SK-N-SH (cell line): ENCODE measurements at regions of chr11 and their contacts with region 1.

Region 1: GRCh38 chr11:46346886-46347636 is at the start of gene DGKZ:
- DNase-seq: peak; percentile 100
- H3K4me3 ChIP-seq: peak within 1 kb of the TSS; percentile 82 to 86
- H3K27ac ChIP-seq: peak within 1 kb of the TSS in 1 of 2 experiments; percentile 5; a peak in 1 of 4 replicates
- H3K4me1 ChIP-seq: peaks cover 19 to 22% of the 10 kb centered on the region in 2 experiments; a peak in 3 of 4 replicates
- H3K27me3 ChIP-seq: no peaks in the 10 kb centered on the region
- CTCF ChIP-seq: peak; percentile 53
- EP300 ChIP-seq: no peak
- RAD21 ChIP-seq: peak; percentile 56; the same call in 1 of the 2 replicates
- polyA plus RNA-seq, gene DGKZ: 23.9 and 33.2 TPM in 2 replicates

Region 2: GRCh38 chr11:45736424-45736823 is 610.6 kb before region 1 on chr11:
- CTCF ChIA-PET with region 1: no interaction called
- POLR2A ChIA-PET with region 1: no interaction called
- DNase-seq: no peak
- H3K4me3 ChIP-seq: no peak overlapping the region
- H3K27ac ChIP-seq: no peak overlapping the region
- H3K4me1 ChIP-seq: no peaks in the 10 kb centered on the region
- H3K27me3 ChIP-seq: no peaks in the 10 kb centered on the region
- CTCF ChIP-seq: no peak
- EP300 ChIP-seq: no peak
- RAD21 ChIP-seq: no peak

Region 3: DNA sequence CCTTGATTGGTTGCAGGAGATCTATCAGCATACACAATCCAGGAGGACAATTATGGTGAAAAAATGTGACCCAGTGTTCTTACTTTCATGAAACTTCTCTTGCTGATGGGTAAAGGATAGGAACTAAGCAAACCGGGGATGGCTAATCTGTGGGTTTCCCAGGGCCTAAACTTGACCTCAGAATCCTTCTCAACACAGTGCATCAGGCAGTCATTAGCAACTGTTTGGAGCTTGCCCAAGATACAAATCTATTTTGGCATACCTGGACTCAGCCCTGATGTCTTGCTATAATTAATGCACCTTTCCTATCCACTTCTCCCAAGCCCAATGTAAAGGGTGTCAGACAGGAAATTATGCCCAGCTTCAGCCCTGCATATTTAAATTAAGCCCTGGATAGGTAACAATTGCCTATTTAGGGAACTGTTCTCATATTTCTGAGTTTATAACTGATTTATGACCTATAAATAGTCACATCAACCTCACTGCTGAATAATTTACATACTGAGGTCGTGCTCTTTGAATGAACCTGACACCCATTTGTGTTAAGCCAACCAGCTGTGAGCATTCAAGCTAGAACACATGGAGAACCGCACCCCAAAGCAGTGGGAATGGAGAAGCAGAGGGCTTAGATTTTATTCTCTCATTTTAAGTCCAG is 216.6 kb before region 1 on chr11:
- CTCF ChIA-PET with region 1: no interaction called
- POLR2A ChIA-PET with region 1: no interaction called
- DNase-seq: no peak
- H3K4me3 ChIP-seq: no peak overlapping the region
- H3K27ac ChIP-seq: no peak overlapping the region
- H3K4me1 ChIP-seq: no peaks in the 10 kb centered on the region; a peak in 1 of 4 replicates
- H3K27me3 ChIP-seq: no peaks in the 10 kb centered on the region
- CTCF ChIP-seq: no peak
- EP300 ChIP-seq: no peak
- RAD21 ChIP-seq: no peak

Region 4: GRCh38 chr11:46332568-46333393 is 14.3 kb before region 1 on chr11:
- CTCF ChIA-PET with region 1: interaction called, 19 read pairs
- POLR2A ChIA-PET with region 1: no interaction called
- DNase-seq: peak; percentile 80
- H3K4me3 ChIP-seq: peak overlapping the region; percentile 3 to 41; a peak in 2 of 4 replicates
- H3K27ac ChIP-seq: no peak overlapping the region
- H3K4me1 ChIP-seq: peaks cover 7 to 15% of the 10 kb centered on the region in 2 experiments; a peak in 2 of 4 replicates
- H3K27me3 ChIP-seq: peaks cover 10% of the 10 kb centered on the region
- CTCF ChIP-seq: no peak
- EP300 ChIP-seq: no peak
- RAD21 ChIP-seq: no peak

Region 5: DNA sequence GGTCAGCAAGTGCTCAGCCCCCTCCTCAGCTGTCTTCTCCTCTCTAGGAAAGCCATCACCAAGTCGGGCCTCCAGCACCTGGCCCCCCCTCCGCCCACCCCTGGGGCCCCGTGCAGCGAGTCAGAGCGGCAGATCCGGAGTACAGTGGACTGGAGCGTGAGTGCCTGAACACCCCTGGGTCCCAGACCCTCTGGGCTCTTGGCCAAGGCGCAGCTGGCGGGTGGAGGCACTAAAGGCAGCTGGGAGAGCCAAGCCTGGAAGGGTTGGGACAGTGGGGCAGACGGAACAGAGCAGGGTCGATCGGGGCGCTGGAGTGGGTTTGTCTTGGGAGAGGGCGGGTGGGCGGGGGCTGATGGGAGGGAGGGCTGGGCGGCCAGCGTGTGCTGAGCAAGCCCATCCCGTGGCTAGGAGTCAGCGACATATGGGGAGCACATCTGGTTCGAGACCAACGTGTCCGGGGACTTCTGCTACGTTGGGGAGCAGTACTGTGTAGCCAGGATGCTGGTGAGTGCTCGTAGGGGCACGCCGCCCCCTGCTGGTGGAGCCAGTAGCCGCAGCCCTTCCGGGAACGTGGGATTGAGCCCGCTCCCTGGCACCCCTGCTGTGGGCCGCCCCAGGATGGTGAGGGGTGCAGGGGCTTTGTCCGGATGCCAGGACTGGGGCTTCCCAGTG is 20.3 kb after region 1 on chr11:
- CTCF ChIA-PET with region 1: interaction called, 423 read pairs
- POLR2A ChIA-PET with region 1: no interaction called
- DNase-seq: peak; percentile 87
- H3K4me3 ChIP-seq: peak overlapping the region in 1 of 2 experiments; percentile 48; a peak in 1 of 4 replicates
- H3K27ac ChIP-seq: no peak overlapping the region; a peak in 1 of 4 replicates
- H3K4me1 ChIP-seq: peaks cover 17 to 41% of the 10 kb centered on the region in 2 experiments; a peak in 3 of 4 replicates
- H3K27me3 ChIP-seq: no peaks in the 10 kb centered on the region
- CTCF ChIP-seq: peak; percentile 83
- EP300 ChIP-seq: no peak
- RAD21 ChIP-seq: peak; percentile 67